ENCODE measurements at regions of chr13 and their contacts with region 1.

Region 1: DNA sequence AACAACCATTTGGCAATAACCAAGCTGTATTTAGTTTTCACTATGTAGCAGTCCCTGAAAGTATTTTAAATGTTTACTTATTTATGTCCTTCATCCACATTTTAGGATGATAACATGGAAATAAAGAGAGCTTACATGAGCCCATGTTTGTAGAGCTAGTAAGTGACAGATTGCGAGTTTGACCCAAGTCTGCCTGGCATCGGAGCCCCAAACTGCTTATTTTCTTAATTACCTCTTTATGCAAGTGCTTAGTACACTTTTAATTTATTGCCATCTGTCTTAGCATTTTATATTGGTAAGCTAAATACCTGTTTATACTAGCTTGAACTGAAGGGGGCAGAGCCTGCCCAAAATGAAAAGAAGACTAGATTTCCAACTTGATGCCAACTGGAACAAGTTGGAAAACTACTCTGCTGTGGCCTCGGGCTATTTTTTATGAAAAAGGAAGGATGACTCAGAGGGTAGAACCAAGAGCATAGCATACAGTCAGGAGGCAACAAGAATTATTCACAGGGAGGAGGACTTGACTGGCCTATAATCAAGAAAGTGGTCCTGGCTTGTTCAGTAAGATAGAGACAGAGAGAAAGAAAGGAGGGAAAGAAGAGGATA is 150.2 kb downstream of the NDFIP2 start:
- DNase-seq: peak; percentile 98
- H3K4me3 Mint-ChIP-seq: no peak overlapping the region
- H3K27ac Mint-ChIP-seq: peak overlapping the region; percentile 23
- H3K4me1 Mint-ChIP-seq: peaks cover 19% of the 10 kb centered on the region
- H3K27me3 Mint-ChIP-seq: no peaks in the 10 kb centered on the region
- CTCF ChIP-seq: peak; percentile 47

Region 2: GRCh38 chr13:77767413-77767812 is 1863.7 kb before region 1 on chr13:
- CTCF ChIA-PET with region 1: no interaction called
- POLR2A ChIA-PET with region 1: no interaction called
- intact Hi-C with region 1: no loop called
- DNase-seq: no peak
- H3K4me3 Mint-ChIP-seq: no peak overlapping the region
- H3K27ac Mint-ChIP-seq: no peak overlapping the region
- H3K4me1 Mint-ChIP-seq: no peaks in the 10 kb centered on the region
- H3K27me3 Mint-ChIP-seq: peaks cover 66% of the 10 kb centered on the region
- CTCF ChIP-seq: no peak

Region 3: DNA sequence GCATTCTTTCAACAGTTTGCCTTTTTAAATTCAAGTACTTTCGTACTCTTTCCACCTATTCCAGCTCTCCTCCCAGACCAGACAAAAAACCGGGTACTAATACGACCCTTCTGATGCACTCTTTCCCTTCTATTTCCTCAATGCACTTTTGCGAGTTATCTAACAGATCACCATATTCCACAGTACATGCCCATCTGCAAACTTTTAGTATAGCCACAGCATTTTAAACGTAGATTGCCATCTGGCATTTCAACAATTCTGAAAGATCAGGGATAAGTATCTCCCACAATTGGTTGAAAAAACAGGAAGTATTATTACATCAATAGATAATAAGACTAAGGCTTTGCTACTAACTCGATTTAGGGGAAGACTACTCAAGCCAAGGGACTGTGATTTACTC is 256.6 kb before region 1 on chr13:
- CTCF ChIA-PET with region 1: no interaction called
- POLR2A ChIA-PET with region 1: no interaction called
- intact Hi-C with region 1: no loop called
- DNase-seq: no peak
- H3K4me3 Mint-ChIP-seq: no peak overlapping the region
- H3K27ac Mint-ChIP-seq: no peak overlapping the region
- H3K4me1 Mint-ChIP-seq: no peaks in the 10 kb centered on the region
- H3K27me3 Mint-ChIP-seq: no peaks in the 10 kb centered on the region
- CTCF ChIP-seq: no peak

Region 4: DNA sequence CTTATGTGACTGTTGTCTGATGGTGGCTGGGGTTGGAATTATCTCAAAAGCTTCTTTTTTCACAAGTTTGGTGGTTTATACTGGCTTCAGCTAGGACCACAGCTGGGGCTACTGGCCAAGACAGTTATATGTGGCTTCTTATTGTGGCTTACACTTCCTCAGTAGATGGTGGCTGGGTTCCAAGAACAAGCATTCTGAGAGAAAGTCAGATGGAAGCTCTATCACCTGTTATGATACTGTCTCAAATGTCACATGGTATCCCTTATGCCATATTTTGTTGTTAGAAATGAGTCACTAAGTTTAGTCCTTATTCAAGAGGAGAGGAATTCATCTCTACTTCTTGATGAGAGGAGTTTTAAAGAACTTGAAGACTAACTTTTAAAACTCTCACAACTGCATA is 108.6 kb before region 1 on chr13:
- CTCF ChIA-PET with region 1: no interaction called
- POLR2A ChIA-PET with region 1: no interaction called
- intact Hi-C with region 1: no loop called
- DNase-seq: peak; percentile 38
- H3K4me3 Mint-ChIP-seq: no peak overlapping the region
- H3K27ac Mint-ChIP-seq: peak overlapping the region; percentile 46
- H3K4me1 Mint-ChIP-seq: peaks cover 24% of the 10 kb centered on the region
- H3K27me3 Mint-ChIP-seq: no peaks in the 10 kb centered on the region
- CTCF ChIP-seq: no peak

Region 5: DNA sequence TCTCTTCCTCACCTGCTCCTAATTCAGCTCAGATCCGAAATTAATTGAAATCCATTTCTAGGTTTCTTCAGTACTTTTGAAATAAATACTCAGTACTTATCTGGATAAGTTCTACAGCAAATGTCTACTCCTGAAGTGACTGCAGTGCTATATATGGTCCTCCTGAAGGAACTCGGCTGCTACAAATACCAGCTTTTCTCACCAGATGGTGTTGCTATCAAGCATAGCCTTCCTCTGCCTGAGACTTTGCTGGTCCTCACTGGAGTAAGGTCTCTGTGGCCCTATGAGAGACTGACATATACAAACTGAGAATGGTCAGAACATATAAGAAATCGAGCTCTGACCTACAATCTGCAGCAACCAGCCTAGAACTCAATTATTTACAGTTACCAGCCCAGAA is 11.4 kb after region 1 on chr13:
- CTCF ChIA-PET with region 1: interaction called, 13 read pairs
- POLR2A ChIA-PET with region 1: interaction called, 6 read pairs
- intact Hi-C with region 1: no loop called
- DNase-seq: no peak
- H3K4me3 Mint-ChIP-seq: no peak overlapping the region
- H3K27ac Mint-ChIP-seq: no peak overlapping the region
- H3K4me1 Mint-ChIP-seq: peaks cover 4% of the 10 kb centered on the region
- H3K27me3 Mint-ChIP-seq: no peaks in the 10 kb centered on the region
- CTCF ChIP-seq: no peak

Region 6: GRCh38 chr13:79679334-79679733 is 48.2 kb after region 1 on chr13:
- CTCF ChIA-PET with region 1: interaction called, 22 read pairs
- POLR2A ChIA-PET with region 1: interaction called, 4 read pairs
- intact Hi-C with region 1: loop called (anchors 2 kb)
- DNase-seq: peak; percentile 81
- H3K4me3 Mint-ChIP-seq: no peak overlapping the region
- H3K27ac Mint-ChIP-seq: no peak overlapping the region
- H3K4me1 Mint-ChIP-seq: peaks cover 14% of the 10 kb centered on the region
- H3K27me3 Mint-ChIP-seq: no peaks in the 10 kb centered on the region
- CTCF ChIP-seq: peak; percentile 81

Region 7: GRCh38 chr13:80037505-80037888 is 406.3 kb after region 1 on chr13:
- CTCF ChIA-PET with region 1: no interaction called
- POLR2A ChIA-PET with region 1: no interaction called
- intact Hi-C with region 1: loop called (anchors 5 kb)
- DNase-seq: peak; percentile 78
- H3K4me3 Mint-ChIP-seq: no peak overlapping the region
- H3K27ac Mint-ChIP-seq: peak overlapping the region; percentile 85
- H3K4me1 Mint-ChIP-seq: peaks cover 19% of the 10 kb centered on the region
- H3K27me3 Mint-ChIP-seq: no peaks in the 10 kb centered on the region
- CTCF ChIP-seq: no peak

Region 8: DNA sequence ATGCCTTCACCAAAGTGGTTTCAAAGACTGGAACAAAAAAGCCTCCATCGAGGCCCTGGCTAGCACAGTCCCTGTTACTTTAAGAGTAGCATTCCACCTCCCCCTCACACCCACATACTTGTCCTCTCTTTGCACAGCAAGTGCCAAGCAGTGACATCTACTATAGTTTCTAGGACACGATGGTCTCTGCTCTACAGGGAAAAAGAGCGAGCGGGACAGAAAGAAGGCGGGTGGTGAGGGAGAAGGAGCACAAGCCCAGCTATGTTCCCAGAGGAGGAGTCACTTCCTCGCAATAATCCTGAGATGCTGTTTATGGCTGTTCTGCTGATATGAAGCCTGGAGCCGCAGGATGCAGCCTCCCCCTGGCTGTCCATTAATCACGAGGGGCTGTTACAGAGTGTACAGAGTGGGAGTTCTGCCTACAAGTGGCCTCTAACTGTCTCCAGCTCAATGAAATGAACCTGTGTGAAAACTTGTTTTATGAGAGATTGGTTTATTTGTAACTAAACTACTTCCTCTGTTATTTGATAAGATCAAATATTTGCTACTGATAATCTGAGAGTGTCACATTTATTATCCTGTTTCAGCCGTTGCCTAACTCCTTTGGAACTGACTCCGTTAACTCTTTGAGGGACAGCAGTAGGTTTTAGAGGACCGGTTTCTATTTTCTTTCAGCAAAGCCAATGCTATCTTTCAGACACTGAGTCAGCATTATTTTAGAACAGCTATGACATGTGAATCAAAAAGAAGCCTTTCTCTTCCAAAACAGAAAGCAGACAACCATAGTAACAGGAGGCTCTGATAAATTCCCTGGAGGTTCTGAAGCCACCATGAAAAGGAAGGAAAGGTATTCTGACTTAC is 501.8 kb after region 1 on chr13:
- CTCF ChIA-PET with region 1: interaction called, 3 read pairs
- POLR2A ChIA-PET with region 1: interaction called, 3 read pairs
- intact Hi-C with region 1: loop called (anchors 10 kb)
- DNase-seq: peak; percentile 51
- H3K4me3 Mint-ChIP-seq: peak overlapping the region; percentile 71
- H3K27ac Mint-ChIP-seq: peak overlapping the region; percentile 88
- H3K4me1 Mint-ChIP-seq: peaks cover 23% of the 10 kb centered on the region
- H3K27me3 Mint-ChIP-seq: no peaks in the 10 kb centered on the region
- CTCF ChIP-seq: no peak

Region 9: DNA sequence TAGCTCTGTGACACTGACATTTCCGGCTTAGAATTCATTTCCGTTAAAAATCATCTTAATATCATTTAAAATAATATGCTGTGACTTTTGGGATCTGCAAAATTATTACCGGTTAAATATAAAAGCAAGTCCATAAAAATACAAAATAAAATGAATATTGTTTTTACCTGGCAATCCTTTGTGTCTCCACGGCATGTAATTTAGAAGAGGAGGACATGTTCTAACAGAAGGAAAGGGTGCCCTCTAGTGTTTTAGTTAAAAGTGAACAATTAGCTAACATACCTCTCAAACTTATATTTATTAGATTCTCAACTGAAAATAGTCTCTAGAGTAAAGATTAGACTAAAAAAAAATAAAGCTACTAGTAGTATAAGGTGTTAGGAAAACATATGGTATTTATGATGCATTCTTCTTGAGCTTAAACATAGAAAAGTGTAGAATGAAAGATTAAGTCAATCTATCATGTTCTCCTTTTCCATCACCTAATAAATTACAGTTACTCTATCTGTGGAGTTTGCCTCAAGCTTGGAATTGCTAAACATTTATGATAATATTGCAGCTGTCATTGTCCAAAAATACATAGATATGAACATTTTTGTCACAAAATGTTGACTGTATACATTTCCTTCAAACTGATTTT is 1386.5 kb after region 1 on chr13:
- CTCF ChIA-PET with region 1: interaction called, 3 read pairs
- POLR2A ChIA-PET with region 1: no interaction called
- intact Hi-C with region 1: loop called (anchors 2 kb)
- DNase-seq: peak; percentile 61
- H3K4me3 Mint-ChIP-seq: no peak overlapping the region
- H3K27ac Mint-ChIP-seq: no peak overlapping the region
- H3K4me1 Mint-ChIP-seq: no peaks in the 10 kb centered on the region
- H3K27me3 Mint-ChIP-seq: no peaks in the 10 kb centered on the region
- CTCF ChIP-seq: peak; percentile 39

Measured in MCF 10A (cell line).